PC-3 (cell line): ENCODE measurements at regions of chr17 and their contacts with region 1.

Region 1: GRCh38 chr17:48738803-48739526 is 10.4 kb upstream of the HOXB13 start:
- DNase-seq: peak; percentile 91
- ATAC-seq: peak; percentile 53
- H3K4me3 ChIP-seq: peak overlapping the region; percentile 66
- H3K27ac ChIP-seq: peak overlapping the region; percentile 61
- H3K4me1 ChIP-seq: peaks cover 52% of the 10 kb centered on the region
- H3K27me3 ChIP-seq: no peaks in the 10 kb centered on the region
- CTCF ChIP-seq: no peak

Region 2: DNA sequence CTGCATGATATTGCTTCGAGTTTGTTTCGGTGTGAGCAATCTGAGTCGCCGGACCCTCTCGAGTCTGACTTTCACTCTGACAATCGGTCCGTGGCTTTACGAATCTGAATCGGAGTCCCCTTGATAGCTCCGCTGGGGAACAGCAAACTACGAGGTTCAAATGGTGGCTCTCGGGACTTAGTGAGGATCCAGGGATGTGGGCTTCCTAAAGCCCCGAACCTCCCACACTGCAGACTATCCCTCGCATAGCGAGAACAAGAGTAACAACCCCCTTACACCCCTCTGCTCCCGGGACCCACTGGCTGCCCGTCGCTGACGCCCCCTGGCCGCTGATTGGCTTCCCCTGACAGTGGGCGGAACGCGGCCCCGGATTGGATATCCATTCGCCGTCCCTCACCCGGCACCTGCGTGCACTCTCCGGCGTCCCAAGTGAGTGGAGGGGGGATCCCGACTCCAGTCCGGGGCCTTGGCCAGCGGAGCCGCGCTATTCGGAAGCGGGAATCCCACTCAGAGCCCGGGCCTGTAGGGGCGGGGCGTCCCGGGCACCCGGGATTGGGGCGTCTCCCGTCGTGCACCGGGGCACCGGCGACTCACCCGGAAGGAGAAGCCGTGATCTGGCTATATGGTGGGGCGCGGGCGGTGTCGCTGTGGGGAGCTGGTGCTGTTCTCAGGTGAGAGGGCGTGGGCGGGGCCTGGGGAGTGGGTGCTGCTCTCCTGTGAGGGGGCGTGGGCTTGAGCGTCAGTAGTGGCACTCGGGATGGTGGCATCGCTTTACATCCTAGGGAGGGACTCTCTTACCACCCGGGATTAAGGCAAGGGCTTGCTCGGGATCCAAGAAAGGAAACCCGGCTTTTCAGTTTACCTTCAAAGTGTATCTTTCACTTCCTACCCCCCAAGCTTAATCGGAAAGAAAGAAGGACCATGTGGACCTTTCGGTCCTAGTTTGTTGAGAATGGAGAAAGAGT is 631.5 kb before region 1 on chr17 and contains the start of gene SNX11:
- CTCF ChIA-PET with region 1: no interaction called
- POLR2A ChIA-PET with region 1: interaction called, 42 read pairs
- intact Hi-C with region 1: no loop called
- DNase-seq: peak; percentile 90
- ATAC-seq: peak; percentile 94
- H3K4me3 ChIP-seq: peak within 1 kb of the TSS; percentile 89
- H3K27ac ChIP-seq: peak within 1 kb of the TSS; percentile 88
- H3K4me1 ChIP-seq: peaks cover 7% of the 10 kb centered on the region; the same call in 1 of the 2 replicates
- H3K27me3 ChIP-seq: no peaks in the 10 kb centered on the region
- CTCF ChIP-seq: no peak
- total RNA-seq, gene SNX11: 17.7 and 23.3 TPM in 2 replicates